GM23248 (cell line): ENCODE measurements at regions of chr4 and their contacts with region 1.

Region 1: GRCh38 chr4:176339936-176340761 is 20.4 kb downstream of the SPCS3 start:
- DNase-seq: peak; percentile 34
- H3K4me3 ChIP-seq: peak overlapping the region; percentile 34
- H3K27ac ChIP-seq: 0 out of 2 replicates have a peak overlapping the region, but pooled peaks have one; percentile 8
- H3K4me1 ChIP-seq: peaks cover 21% of the 10 kb centered on the region
- H3K27me3 ChIP-seq: no peaks in the 10 kb centered on the region

Region 2: DNA sequence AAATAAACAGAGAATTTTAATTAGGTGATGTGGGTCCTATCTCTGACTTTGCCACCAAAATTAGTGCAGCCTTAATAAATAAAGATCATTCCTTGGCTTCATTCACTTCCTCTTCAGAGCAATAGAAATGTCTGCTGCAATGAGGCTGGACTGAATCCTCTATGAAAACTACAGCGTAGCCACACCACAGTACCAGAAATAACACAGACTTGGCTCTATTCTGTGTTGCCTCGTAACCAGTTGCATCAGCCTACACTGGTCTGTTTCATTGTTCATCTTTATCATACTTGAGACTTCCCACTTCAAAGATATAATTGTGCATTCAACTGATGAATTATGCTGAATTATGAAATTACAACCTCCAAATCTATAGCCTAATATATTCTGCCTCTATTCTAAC is 1526.9 kb before region 1 on chr4:
- in situ Hi-C with region 1: no loop called
- DNase-seq: no peak
- H3K4me3 ChIP-seq: no peak overlapping the region
- H3K27ac ChIP-seq: no peak overlapping the region
- H3K4me1 ChIP-seq: no peaks in the 10 kb centered on the region
- H3K27me3 ChIP-seq: no peaks in the 10 kb centered on the region

Region 3: DNA sequence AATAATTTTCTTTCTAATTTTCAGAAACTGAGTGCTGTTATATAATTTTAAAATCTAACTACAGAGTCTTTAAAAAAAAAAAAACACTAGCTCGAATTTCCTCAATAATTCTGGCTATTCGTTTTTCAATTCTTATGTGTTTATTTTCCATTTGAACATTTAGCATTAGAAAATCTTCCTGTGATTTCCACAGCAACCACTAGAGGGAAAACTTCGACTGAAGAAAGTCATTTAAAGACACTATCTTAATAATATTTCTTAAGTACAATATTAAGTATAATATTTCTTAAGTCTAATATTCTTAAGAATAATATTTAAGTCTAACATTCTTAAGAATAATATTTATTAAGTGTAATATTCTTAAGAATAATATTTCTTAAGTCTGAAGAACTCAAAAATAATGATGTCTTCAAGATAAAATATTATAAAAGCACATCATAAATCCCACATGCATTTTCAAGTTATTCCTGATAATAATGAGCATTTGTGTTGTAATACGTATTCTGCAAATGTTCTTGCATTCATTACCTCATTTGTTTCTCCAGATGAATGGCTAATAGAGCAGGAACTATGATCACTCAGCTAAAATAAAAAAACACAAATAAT is 392.9 kb before region 1 on chr4:
- in situ Hi-C with region 1: loop called (anchors 10 kb)
- DNase-seq: peak; percentile 47
- H3K4me3 ChIP-seq: 0 out of 2 replicates have a peak overlapping the region, but pooled peaks have one; percentile 8
- H3K27ac ChIP-seq: no peak overlapping the region
- H3K4me1 ChIP-seq: no peaks in the 10 kb centered on the region
- H3K27me3 ChIP-seq: no peaks in the 10 kb centered on the region

Region 4: DNA sequence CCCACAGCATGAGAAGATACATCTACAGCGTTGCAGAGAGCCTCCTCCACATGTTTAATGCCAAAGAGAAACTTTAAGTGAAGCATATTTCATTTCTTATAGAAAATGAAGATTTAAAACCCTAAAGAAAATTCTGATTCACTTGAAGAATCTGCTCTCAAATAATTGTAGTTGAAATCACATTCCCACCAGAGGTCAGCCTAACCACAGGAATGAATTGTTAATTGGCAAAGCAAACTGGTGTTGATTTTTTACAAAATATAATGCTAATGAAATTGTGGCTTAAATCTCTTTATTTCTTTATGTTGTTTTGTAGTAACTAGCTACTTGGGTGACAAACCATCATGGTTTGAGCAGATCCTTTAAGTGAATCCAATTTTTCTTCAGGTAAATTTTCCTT is 305.6 kb before region 1 on chr4:
- in situ Hi-C with region 1: loop called (anchors 10 kb)
- DNase-seq: peak; percentile 63
- H3K4me3 ChIP-seq: no peak overlapping the region
- H3K27ac ChIP-seq: no peak overlapping the region
- H3K4me1 ChIP-seq: no peaks in the 10 kb centered on the region
- H3K27me3 ChIP-seq: no peaks in the 10 kb centered on the region

Region 5: GRCh38 chr4:176526704-176527103 is 186.6 kb after region 1 on chr4:
- in situ Hi-C with region 1: no loop called
- DNase-seq: no peak
- H3K4me3 ChIP-seq: no peak overlapping the region
- H3K27ac ChIP-seq: no peak overlapping the region
- H3K4me1 ChIP-seq: no peaks in the 10 kb centered on the region
- H3K27me3 ChIP-seq: no peaks in the 10 kb centered on the region